Naive thymus-derived CD4-positive, alpha-beta T cell (primary cell): ENCODE measurements at regions of chr14 and their contacts with region 1.

Region 1: GRCh38 chr14:58427281-58428117 is at the starts of genes KIAA0586 and TIMM9:
- DNase-seq: peak; percentile 82 to 98 (median 97)
- ATAC-seq: peak; percentile 94
- H3K4me3 ChIP-seq: peak within 1 kb of the TSS; percentile 88
- H3K4me3 Mint-ChIP-seq: peak within 1 kb of the TSS; percentile 82 to 100 (median 94)
- H3K27ac ChIP-seq: peak within 1 kb of the TSS; percentile 93
- H3K27ac Mint-ChIP-seq: peak within 1 kb of the TSS; percentile 95 to 99 (median 98)
- H3K4me1 ChIP-seq: peaks cover 13 to 17% of the 10 kb centered on the region in 2 donors
- H3K4me1 Mint-ChIP-seq: peaks cover 18 to 65% (median 53%) of the 10 kb centered on the region in 7 donors
- H3K27me3 ChIP-seq: no peaks in the 10 kb centered on the region
- H3K27me3 Mint-ChIP-seq: peaks cover 0 to 3% (median 0%) of the 10 kb centered on the region in 5 donors
- total RNA-seq, gene KIAA0586: 26.4 to 52.5 (median 34.8) TPM
- total RNA-seq, gene TIMM9: 22.1 to 42.5 (median 37.0) TPM

Region 2: GRCh38 chr14:57268161-57269069 is 1159.1 kb before region 1 on chr14 and contains the starts of genes AP5M1 and EXOC5:
- CTCF ChIA-PET with region 1: no interaction called
- POLR2A ChIA-PET with region 1: interaction called, 4 read pairs
- intact Hi-C with region 1: loop called (anchors 2 to 5 kb)
- DNase-seq: peak; percentile 78 to 95 (median 93)
- ATAC-seq: peak; percentile 89
- H3K4me3 ChIP-seq: peak within 1 kb of the TSS; percentile 89
- H3K4me3 Mint-ChIP-seq: peak within 1 kb of the TSS; percentile 97 to 100 (median 99)
- H3K27ac ChIP-seq: peak within 1 kb of the TSS; percentile 91
- H3K27ac Mint-ChIP-seq: peak within 1 kb of the TSS; percentile 98 to 100 (median 99)
- H3K4me1 ChIP-seq: peaks cover 29 to 34% of the 10 kb centered on the region in 2 donors
- H3K4me1 Mint-ChIP-seq: peaks cover 41 to 93% (median 76%) of the 10 kb centered on the region in 7 donors
- H3K27me3 ChIP-seq: no peaks in the 10 kb centered on the region
- H3K27me3 Mint-ChIP-seq: no peaks in the 10 kb centered on the region
- total RNA-seq, gene AP5M1: 42.3 to 62.8 (median 52.1) TPM
- total RNA-seq, gene EXOC5: 27.3 to 71.6 (median 42.2) TPM

Region 3: GRCh38 chr14:58131386-58131785 is 296.1 kb before region 1 on chr14:
- CTCF ChIA-PET with region 1: no interaction called
- POLR2A ChIA-PET with region 1: no interaction called
- intact Hi-C with region 1: no loop called
- DNase-seq: no peak
- ATAC-seq: no peak
- H3K4me3 ChIP-seq: no peak overlapping the region
- H3K4me3 Mint-ChIP-seq: no peak overlapping the region
- H3K27ac ChIP-seq: no peak overlapping the region
- H3K27ac Mint-ChIP-seq: no peak overlapping the region
- H3K4me1 ChIP-seq: no peaks in the 10 kb centered on the region
- H3K4me1 Mint-ChIP-seq: peaks cover 0 to 1% (median 0%) of the 10 kb centered on the region in 7 donors
- H3K27me3 ChIP-seq: no peaks in the 10 kb centered on the region
- H3K27me3 Mint-ChIP-seq: peaks cover 0 to 12% (median 0%) of the 10 kb centered on the region in 5 donors

Region 4: GRCh38 chr14:58199726-58200479 is 227.6 kb before region 1 on chr14 and contains the start of gene ACTR10:
- CTCF ChIA-PET with region 1: no interaction called
- POLR2A ChIA-PET with region 1: interaction called, 4 read pairs
- intact Hi-C with region 1: loop called (anchors 1 kb)
- DNase-seq: peak; percentile 80 to 93 (median 88)
- ATAC-seq: peak; percentile 94
- H3K4me3 ChIP-seq: peak within 1 kb of the TSS; percentile 75
- H3K4me3 Mint-ChIP-seq: peak within 1 kb of the TSS; percentile 90 to 99 (median 97)
- H3K27ac ChIP-seq: peak within 1 kb of the TSS; percentile 87
- H3K27ac Mint-ChIP-seq: peak within 1 kb of the TSS; percentile 93 to 99 (median 98)
- H3K4me1 ChIP-seq: peaks cover 15 to 27% of the 10 kb centered on the region in 2 donors
- H3K4me1 Mint-ChIP-seq: peaks cover 21 to 60% (median 48%) of the 10 kb centered on the region in 7 donors
- H3K27me3 ChIP-seq: no peaks in the 10 kb centered on the region
- H3K27me3 Mint-ChIP-seq: peaks cover 0 to 7% (median 0%) of the 10 kb centered on the region in 5 donors
- total RNA-seq, gene ACTR10: 40.0 to 54.6 (median 50.4) TPM

Region 5: DNA sequence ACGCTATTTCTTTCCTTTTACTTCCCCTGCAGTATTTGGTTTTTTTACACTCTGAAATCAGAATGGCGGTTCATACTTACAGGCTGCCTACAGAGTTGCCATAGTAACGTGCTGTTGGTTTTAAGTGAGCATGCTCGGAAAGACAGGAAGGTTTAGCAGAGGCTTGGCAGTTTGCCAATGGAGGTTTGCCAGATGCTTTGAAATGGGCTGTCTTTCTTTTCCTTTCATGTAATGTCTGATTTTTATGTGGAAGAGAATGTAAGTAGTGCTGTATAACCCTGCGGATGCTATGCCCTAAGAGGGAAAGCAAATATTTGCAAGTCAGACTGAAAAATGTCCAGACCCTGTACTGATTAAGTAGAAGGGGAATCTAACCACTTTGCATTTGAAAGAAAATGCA is 96.4 kb before region 1 on chr14:
- CTCF ChIA-PET with region 1: interaction called, 3 read pairs
- POLR2A ChIA-PET with region 1: interaction called, 3 read pairs
- intact Hi-C with region 1: loop called (anchors 1 kb)
- DNase-seq: peak; percentile 61 to 98 (median 95)
- ATAC-seq: peak; percentile 97
- H3K4me3 ChIP-seq: peak overlapping the region; percentile 17
- H3K4me3 Mint-ChIP-seq: peak overlapping the region; percentile 38 to 85 (median 76)
- H3K27ac ChIP-seq: peak overlapping the region; percentile 72
- H3K27ac Mint-ChIP-seq: peak overlapping the region; percentile 84 to 97 (median 94)
- H3K4me1 ChIP-seq: peaks cover 5 to 9% of the 10 kb centered on the region in 2 donors
- H3K4me1 Mint-ChIP-seq: peaks cover 17 to 42% (median 32%) of the 10 kb centered on the region in 7 donors
- H3K27me3 ChIP-seq: no peaks in the 10 kb centered on the region
- H3K27me3 Mint-ChIP-seq: no peaks in the 10 kb centered on the region

Region 6: DNA sequence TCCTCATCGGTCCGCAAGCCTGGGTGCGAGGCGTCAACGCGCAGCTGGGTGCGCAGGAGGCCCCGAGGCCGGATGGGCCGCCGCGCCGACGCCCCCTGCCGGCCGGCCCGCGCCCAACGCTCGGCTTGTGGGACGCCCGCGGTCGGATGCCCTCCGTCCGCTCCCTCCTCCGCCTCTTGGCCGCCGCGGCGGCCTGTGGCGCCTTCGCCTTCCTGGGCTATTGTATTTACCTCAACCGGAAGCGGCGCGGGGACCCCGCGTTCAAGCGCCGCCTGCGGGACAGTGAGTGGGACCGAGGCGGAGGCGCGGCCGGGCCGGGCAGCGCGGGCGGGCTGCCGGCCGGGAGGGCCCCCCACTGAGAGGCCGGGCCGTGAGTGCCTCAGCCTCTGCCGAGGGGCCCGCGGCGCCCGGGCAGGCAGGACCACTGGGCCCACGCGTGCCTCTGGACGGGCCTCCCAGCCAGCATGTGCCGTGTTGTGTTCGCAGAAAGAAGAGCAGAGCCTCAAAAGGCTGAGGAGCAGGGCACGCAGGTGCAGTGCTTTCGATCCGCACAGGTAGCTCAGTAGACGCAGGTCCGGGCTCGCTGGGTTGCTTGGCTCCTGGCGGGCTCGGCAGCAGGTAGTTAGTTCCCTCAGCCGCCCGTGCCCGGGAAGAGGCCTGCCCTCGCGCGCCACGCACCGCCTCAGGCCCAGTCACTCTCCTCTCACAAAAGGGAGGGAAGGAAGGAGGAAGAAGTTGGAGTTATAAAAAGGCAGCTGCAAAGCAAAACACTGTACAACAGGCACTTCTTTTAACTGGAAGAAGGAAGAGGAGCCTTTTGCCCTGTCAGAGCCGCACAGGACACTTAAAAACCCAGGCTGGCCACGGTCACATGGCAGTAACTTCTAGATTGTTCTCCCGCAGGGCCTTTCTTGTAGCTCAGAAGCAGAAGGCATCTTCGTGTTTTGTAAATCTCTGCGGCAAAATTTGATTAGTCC is 31.4 kb before region 1 on chr14 and contains the start of gene TOMM20L:
- CTCF ChIA-PET with region 1: interaction called, 5 read pairs
- POLR2A ChIA-PET with region 1: interaction called, 29 read pairs
- intact Hi-C with region 1: loop called (anchors 1 kb)
- DNase-seq: peak; percentile 54 to 84 (median 72)
- ATAC-seq: peak; percentile 92
- H3K4me3 ChIP-seq: peak within 1 kb of the TSS; percentile 33
- H3K4me3 Mint-ChIP-seq: peak within 1 kb of the TSS; percentile 78 to 93 (median 86)
- H3K27ac ChIP-seq: peak within 1 kb of the TSS; percentile 72
- H3K27ac Mint-ChIP-seq: peak within 1 kb of the TSS; percentile 66 to 97 (median 95)
- H3K4me1 ChIP-seq: peaks cover 8 to 9% of the 10 kb centered on the region in 2 donors
- H3K4me1 Mint-ChIP-seq: peaks cover 6 to 19% (median 12%) of the 10 kb centered on the region in 7 donors
- H3K27me3 ChIP-seq: no peaks in the 10 kb centered on the region
- H3K27me3 Mint-ChIP-seq: peaks cover 0 to 2% (median 0%) of the 10 kb centered on the region in 5 donors
- total RNA-seq, gene TOMM20L: not detected

Region 7: DNA sequence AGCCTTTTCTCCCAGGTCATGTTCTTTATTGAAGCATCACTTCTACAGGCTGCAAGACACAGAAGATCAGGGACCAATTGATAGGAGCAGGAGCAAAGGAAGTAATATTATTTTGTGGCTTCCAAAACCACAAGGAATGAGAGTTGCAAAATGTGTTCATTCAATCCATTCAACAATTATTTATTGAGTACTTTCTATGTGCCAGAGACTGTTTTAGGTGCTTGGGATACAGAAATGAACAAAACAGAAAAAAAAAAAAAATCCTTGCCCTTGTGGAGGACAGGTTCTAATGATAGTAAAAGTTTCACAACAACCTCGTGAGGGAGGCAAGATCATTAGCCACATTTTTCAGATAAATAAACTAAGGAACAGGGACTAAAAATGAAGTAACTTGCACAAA is 190.1 kb after region 1 on chr14:
- CTCF ChIA-PET with region 1: no interaction called
- POLR2A ChIA-PET with region 1: no interaction called
- intact Hi-C with region 1: no loop called
- DNase-seq: no peak
- ATAC-seq: no peak
- H3K4me3 ChIP-seq: no peak overlapping the region
- H3K4me3 Mint-ChIP-seq: no peak overlapping the region
- H3K27ac ChIP-seq: no peak overlapping the region
- H3K27ac Mint-ChIP-seq: no peak overlapping the region
- H3K4me1 ChIP-seq: no peaks in the 10 kb centered on the region
- H3K4me1 Mint-ChIP-seq: peaks cover 1 to 16% (median 11%) of the 10 kb centered on the region in 7 donors
- H3K27me3 ChIP-seq: no peaks in the 10 kb centered on the region
- H3K27me3 Mint-ChIP-seq: peaks cover 0 to 7% (median 0%) of the 10 kb centered on the region in 5 donors

Region 8: GRCh38 chr14:58637391-58638230 is 210.1 kb after region 1 on chr14 and contains the start of gene DACT1:
- CTCF ChIA-PET with region 1: no interaction called
- POLR2A ChIA-PET with region 1: interaction called, 5 read pairs
- intact Hi-C with region 1: loop called (anchors 1 to 5 kb)
- DNase-seq: peak; percentile 45 to 74 (median 64)
- ATAC-seq: peak; percentile 80
- H3K4me3 ChIP-seq: peak within 1 kb of the TSS; percentile 80
- H3K4me3 Mint-ChIP-seq: peak within 1 kb of the TSS; percentile 89 to 99 (median 98)
- H3K27ac ChIP-seq: peak within 1 kb of the TSS; percentile 61
- H3K27ac Mint-ChIP-seq: peak within 1 kb of the TSS; percentile 84 to 95 (median 91)
- H3K4me1 ChIP-seq: peaks cover 0 to 22% of the 10 kb centered on the region in 2 donors
- H3K4me1 Mint-ChIP-seq: peaks cover 20 to 61% (median 45%) of the 10 kb centered on the region in 7 donors
- H3K27me3 ChIP-seq: no peaks in the 10 kb centered on the region
- H3K27me3 Mint-ChIP-seq: peaks cover 0 to 44% (median 6%) of the 10 kb centered on the region in 5 donors
- total RNA-seq, gene DACT1: 8.2 to 32.3 (median 15.0) TPM

Region 9: DNA sequence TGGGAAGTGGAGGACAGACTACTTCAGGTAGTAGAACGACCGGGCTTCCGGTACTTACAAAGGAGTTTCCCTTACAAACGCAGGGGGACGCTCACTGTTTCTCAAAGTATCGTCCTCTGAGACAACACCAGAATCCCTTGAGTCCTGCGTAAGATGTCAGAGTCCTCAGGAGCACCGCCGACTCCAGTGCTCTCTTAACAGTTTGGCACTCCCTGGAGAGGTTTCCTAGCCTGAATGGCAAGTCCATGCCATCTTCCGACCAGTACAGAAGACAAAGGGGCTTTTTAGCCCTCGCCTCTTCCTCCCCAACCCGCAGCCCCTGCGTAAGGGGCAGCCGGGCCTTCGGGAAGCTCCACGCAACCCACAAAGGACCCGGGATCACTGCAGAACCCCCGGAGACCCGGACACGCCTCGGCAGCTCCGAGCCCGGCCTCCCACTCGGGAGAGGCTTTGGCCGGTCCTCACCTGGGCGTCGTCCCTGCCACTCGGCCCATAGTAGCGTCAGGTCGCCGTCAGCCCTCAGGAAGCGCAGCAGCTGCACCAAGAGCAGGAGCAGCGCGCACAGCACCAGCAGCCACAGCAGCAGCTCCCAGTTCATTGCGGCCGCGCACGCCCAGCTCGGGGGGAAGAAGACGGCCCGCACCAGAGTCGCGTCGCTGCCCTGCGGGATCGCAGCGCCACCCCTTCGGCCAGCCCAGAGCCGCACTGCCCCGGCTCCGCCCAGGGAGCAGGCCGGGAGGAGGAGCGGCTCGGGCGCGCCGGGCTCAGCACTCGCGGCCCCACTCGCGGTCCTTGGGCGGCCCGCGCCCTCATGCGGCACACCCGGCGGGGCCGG is 1737.4 kb after region 1 on chr14 and contains the start of gene DHRS7:
- CTCF ChIA-PET with region 1: no interaction called
- POLR2A ChIA-PET with region 1: interaction called, 3 read pairs
- intact Hi-C with region 1: loop called in 1 of 2 experiments (anchors 10 kb)
- DNase-seq: peak; percentile 47 to 75 (median 60)
- ATAC-seq: peak; percentile 85
- H3K4me3 ChIP-seq: peak within 1 kb of the TSS; percentile 85
- H3K4me3 Mint-ChIP-seq: peak within 1 kb of the TSS; percentile 86 to 99 (median 95)
- H3K27ac ChIP-seq: peak within 1 kb of the TSS; percentile 90
- H3K27ac Mint-ChIP-seq: peak within 1 kb of the TSS; percentile 91 to 99 (median 97)
- H3K4me1 ChIP-seq: peaks cover 20 to 27% of the 10 kb centered on the region in 2 donors
- H3K4me1 Mint-ChIP-seq: peaks cover 22 to 53% (median 42%) of the 10 kb centered on the region in 7 donors
- H3K27me3 ChIP-seq: no peaks in the 10 kb centered on the region
- H3K27me3 Mint-ChIP-seq: no peaks in the 10 kb centered on the region
- total RNA-seq, gene DHRS7: 29.9 to 50.9 (median 38.0) TPM